AG04449 (cell line): ENCODE measurements at regions of chr18 and their contacts with region 1.

Region 1: GRCh38 chr18:23918401-23919032 is 96.0 kb upstream of the TTC39C start:
- DNase-seq: no peak
- H3K4me3 ChIP-seq: no peak overlapping the region
- CTCF ChIP-seq: peak; percentile 76

Region 2: GRCh38 chr18:23819001-23819400 is 99.5 kb before region 1 on chr18:
- CTCF ChIA-PET with region 1: interaction called, 19 read pairs
- POLR2A ChIA-PET with region 1: no interaction called
- DNase-seq: no peak
- H3K4me3 ChIP-seq: no peak overlapping the region
- CTCF ChIP-seq: no peak

Region 3: GRCh38 chr18:23837591-23837990 is 80.9 kb before region 1 on chr18:
- CTCF ChIA-PET with region 1: interaction called, 22 read pairs
- POLR2A ChIA-PET with region 1: no interaction called
- DNase-seq: peak; percentile 75
- H3K4me3 ChIP-seq: no peak overlapping the region
- CTCF ChIP-seq: no peak

Region 4: GRCh38 chr18:23881778-23882177 is 36.7 kb before region 1 on chr18:
- CTCF ChIA-PET with region 1: interaction called, 14 read pairs
- POLR2A ChIA-PET with region 1: no interaction called
- DNase-seq: no peak
- H3K4me3 ChIP-seq: no peak overlapping the region
- CTCF ChIP-seq: no peak

Region 5: DNA sequence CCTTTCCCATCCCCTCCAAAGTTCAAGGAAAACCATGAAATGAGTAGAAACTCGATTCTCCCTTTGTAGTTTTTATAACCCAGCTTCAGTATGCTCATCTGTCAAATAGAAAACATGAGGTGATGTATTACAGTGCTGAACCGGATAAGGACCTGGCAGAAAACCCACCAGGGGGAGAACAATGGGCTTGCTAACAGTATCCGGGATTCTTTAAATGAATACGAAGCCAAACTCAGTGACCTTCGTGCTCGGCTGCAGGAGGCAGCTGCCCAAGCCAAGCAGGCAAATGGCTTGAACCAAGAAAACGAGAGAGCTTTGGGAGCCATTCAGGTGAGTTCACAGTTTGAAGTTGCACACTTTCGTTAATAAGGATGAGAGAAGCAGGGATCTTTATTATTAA is 17.5 kb before region 1 on chr18:
- CTCF ChIA-PET with region 1: interaction called, 73 read pairs
- POLR2A ChIA-PET with region 1: no interaction called
- DNase-seq: no peak
- H3K4me3 ChIP-seq: no peak overlapping the region
- CTCF ChIP-seq: no peak

Region 6: DNA sequence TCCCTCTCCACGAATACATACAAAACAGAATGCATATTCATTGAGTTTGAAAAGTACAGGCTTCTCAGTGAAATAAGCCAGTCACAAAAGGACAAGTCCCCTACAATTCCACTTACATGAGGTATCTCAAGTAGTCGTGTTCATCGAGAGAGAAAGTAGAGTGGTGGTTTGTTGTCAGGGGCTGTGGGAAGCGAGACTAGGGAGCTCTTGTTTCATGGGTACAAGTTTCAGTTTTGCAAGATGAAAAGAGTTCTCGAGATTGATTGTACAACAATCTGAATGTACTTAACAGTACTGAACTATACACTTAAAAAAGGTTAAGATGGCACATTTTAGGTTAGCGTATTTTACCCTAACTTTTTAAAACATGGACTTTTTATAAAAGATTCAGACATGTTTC is 24.6 kb after region 1 on chr18:
- CTCF ChIA-PET with region 1: interaction called, 14 read pairs
- POLR2A ChIA-PET with region 1: no interaction called
- DNase-seq: no peak
- H3K4me3 ChIP-seq: no peak overlapping the region
- CTCF ChIP-seq: no peak

Region 7: GRCh38 chr18:24208270-24209035 is 289.9 kb after region 1 on chr18:
- CTCF ChIA-PET with region 1: no interaction called
- POLR2A ChIA-PET with region 1: no interaction called
- DNase-seq: no peak
- H3K4me3 ChIP-seq: no peak overlapping the region
- CTCF ChIP-seq: no peak